Motor neuron (in vitro differentiated cells): ENCODE measurements at regions of chrX and their contacts with region 1.

Region 1: DNA sequence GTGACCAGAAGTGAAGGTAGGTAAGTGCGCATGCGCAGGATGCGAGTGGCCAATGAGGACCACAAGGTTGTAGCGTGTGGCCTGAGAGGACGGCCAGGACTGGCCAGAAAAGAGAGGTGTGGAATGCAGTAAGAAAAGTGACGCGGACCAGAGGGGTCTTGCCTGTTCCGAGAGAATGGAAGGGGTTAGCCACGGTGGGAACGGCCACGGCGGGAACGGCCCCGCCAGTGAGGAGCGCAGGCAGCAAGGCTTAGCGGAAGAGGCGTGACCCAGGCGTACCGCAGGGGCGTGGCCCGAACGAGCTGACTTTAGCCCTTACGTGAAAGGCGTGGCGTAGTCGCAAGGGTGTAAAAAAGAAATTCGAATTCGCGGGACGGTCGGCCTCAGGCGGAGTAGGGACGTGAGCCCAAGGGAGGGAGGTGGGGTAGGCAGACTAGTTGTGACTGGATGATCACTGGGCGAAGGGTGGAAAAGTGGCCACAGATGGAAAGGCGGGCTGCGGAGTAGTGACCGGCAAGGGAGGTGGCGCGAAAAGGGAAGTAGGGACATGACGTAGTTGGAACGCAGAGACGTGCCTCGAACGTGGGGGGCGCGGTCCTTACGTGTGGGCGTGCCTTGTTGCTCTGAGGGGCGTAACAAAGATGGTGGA is 10.4 kb upstream of the CLTRN start:
- ATAC-seq: peak; percentile 72 to 88 (median 86)
- H3K4me3 ChIP-seq: peak overlapping the region; percentile 58 to 99 (median 86)
- H3K27ac ChIP-seq: peak overlapping the region; percentile 98 to 100
- H3K4me1 ChIP-seq: peaks cover 3 to 9% of the 10 kb centered on the region in 2 donors

Region 2: GRCh38 chrX:15416133-15416993 is 258.6 kb before region 1 on chrX:
- in situ Hi-C with region 1: no loop called
- ATAC-seq: peak in 3 of 8 experiments; percentile 44 to 77 (median 74)
- H3K4me3 ChIP-seq: no peak overlapping the region
- H3K27ac ChIP-seq: no peak overlapping the region
- H3K4me1 ChIP-seq: peaks cover 4 to 9% of the 10 kb centered on the region in 2 donors

Region 3: DNA sequence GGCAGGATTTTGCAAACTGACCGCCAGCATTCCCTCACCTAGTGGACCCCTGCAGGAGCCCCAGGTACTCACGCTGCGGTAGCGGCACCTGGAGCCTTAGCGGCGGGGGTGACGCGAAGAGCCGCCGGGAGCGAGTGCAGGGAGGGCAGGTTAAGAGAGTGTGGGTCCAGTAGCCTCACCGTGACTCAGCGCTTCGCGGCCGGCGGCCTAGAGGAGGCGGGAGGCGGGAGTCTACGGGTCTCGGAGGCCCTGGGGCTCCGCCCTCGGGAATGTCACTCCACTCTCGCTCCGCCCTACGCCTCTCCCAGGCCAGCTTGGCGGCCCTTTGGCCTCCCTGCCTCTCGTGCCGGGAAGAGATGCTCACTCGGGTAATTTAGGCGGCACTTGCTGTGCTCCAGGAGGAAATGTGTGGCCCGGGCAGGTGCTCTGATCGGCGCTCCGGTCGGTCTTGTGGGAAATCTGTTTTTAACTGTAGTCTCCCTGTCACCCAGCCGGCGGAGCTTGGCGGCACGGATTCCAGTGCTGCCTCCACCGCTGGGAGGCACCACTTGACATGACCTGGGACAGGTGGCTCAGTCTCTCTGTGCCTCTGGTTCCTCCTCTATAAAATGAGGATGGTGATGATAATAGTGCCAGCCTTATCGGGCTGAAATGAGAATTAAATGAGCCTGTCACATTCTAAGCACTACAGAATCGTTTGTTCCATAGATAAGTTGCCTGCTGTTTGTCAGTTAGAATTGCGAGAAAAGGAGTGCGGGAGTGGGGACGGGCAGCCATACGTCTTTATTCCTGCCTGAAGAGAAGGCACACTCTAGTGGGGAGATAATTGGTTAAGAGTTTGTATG is 181.6 kb before region 1 on chrX and contains the start of gene PIR:
- in situ Hi-C with region 1: loop called in 1 of 9 experiments (anchors 25 kb)
- ATAC-seq: peak; percentile 99
- H3K4me3 ChIP-seq: peak within 1 kb of the TSS; percentile 30 to 56 (median 40)
- H3K27ac ChIP-seq: peak within 1 kb of the TSS in 1 of 2 donors; percentile 60
- H3K4me1 ChIP-seq: peaks cover 0 to 4% of the 10 kb centered on the region in 2 donors
- total RNA-seq, gene PIR: 7.7 to 41.6 (median 13.9) TPM

Region 4: GRCh38 chrX:15564981-15565579 is 109.9 kb before region 1 on chrX:
- in situ Hi-C with region 1: no loop called
- ATAC-seq: peak in 7 of 8 experiments; percentile 33 to 99 (median 54)
- H3K4me3 ChIP-seq: no peak overlapping the region
- H3K27ac ChIP-seq: no peak overlapping the region
- H3K4me1 ChIP-seq: peaks cover 0 to 4% of the 10 kb centered on the region in 2 donors

Region 5: GRCh38 chrX:15789979-15790768 is 115.2 kb after region 1 on chrX and contains the start of gene ZRSR2:
- in situ Hi-C with region 1: loop called in 1 of 9 experiments (anchors 25 kb)
- ATAC-seq: peak; percentile 89 to 93 (median 92)
- H3K4me3 ChIP-seq: peak within 1 kb of the TSS; percentile 64 to 91 (median 68)
- H3K27ac ChIP-seq: peak within 1 kb of the TSS; percentile 97 to 99
- H3K4me1 ChIP-seq: peaks cover 0 to 4% of the 10 kb centered on the region in 2 donors
- total RNA-seq, gene ZRSR2: 7.8 to 19.6 (median 10.3) TPM